H1 (cell line): ENCODE measurements at regions of chr3 and their contacts with region 1.

Region 1: DNA sequence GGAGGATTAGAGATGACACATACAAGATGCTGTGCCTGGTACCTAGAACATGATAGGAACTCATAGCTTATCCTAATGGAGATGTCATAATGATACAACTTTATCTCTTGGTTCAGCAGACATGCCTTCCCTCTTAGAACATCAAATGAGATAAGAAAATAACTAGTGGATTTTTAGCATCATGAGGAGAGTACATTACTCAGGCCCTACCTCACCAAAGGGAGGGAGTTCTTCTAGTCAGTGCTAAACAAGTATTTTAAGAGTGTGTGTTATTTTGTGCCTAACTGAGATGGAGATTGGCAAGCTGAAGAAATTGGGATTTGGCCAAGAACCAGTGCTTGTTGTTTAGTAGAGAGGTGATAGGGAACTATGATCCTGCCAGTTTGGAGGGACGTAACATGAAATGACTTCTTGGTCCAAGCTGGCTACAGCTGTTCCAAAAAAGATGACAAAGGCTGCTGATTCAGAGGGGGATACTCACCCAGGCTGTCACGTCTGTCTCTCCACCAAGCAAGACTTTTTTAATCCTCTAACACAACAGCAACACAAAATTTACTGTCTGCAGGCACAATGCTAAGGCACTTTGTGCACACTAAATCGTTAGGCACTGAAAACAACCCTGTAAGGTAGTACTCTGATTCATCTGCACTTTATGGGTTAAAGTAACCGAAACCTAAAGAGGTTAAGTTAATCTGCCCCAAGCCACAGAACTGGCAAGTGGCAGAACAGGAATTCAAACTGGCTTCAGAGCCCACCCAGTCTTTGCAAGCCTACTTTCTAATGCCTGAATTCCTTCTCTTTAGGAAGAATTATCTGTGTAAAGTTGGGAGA is 126.5 kb downstream of the CMSS1 start:
- DNase-seq: no peak
- H3K4me3 ChIP-seq: no peak overlapping the region
- H3K27ac ChIP-seq: no peak overlapping the region
- H3K4me1 ChIP-seq: peaks cover 0 to 9% (median 2%) of the 10 kb centered on the region in 4 experiments; a peak in 5 of 7 replicates
- H3K27me3 ChIP-seq: no peaks in the 10 kb centered on the region
- CTCF ChIP-seq: no peak
- EP300 ChIP-seq: no peak
- POLR2A ChIP-seq: no peak
- RAD21 ChIP-seq: no peak

Region 2: GRCh38 chr3:99920481-99921376 is 23.4 kb before region 1 on chr3:
- CTCF ChIA-PET with region 1: interaction called, 10 read pairs
- POLR2A ChIA-PET with region 1: no interaction called
- DNase-seq: no peak
- H3K4me3 ChIP-seq: no peak overlapping the region
- H3K27ac ChIP-seq: no peak overlapping the region
- H3K4me1 ChIP-seq: peaks cover 0 to 15% (median 8%) of the 10 kb centered on the region in 4 experiments; a peak in 5 of 7 replicates
- H3K27me3 ChIP-seq: no peaks in the 10 kb centered on the region
- CTCF ChIP-seq: no peak
- EP300 ChIP-seq: no peak
- POLR2A ChIP-seq: no peak
- RAD21 ChIP-seq: 0 out of 4 replicates have a peak, but pooled peaks of 1 of the 2 experiments have one; percentile 2

Region 3: GRCh38 chr3:100210772-100211135 is 266.6 kb after region 1 on chr3:
- CTCF ChIA-PET with region 1: no interaction called
- POLR2A ChIA-PET with region 1: no interaction called
- DNase-seq: peak in 1 of 2 experiments; percentile 31
- H3K4me3 ChIP-seq: peak overlapping the region in 1 of 4 experiments; percentile 35; a peak in 1 of 8 replicates
- H3K27ac ChIP-seq: peak overlapping the region; percentile 53
- H3K4me1 ChIP-seq: peaks cover 0 to 17% (median 12%) of the 10 kb centered on the region in 4 experiments; a peak in 5 of 7 replicates
- H3K27me3 ChIP-seq: no peaks in the 10 kb centered on the region; a peak in 1 of 7 replicates
- CTCF ChIP-seq: no peak
- EP300 ChIP-seq: no peak; a peak in 1 of 3 replicates
- POLR2A ChIP-seq: no peak
- RAD21 ChIP-seq: no peak